ENCODE measurements at regions of chr16 and their contacts with region 1.

Region 1: DNA sequence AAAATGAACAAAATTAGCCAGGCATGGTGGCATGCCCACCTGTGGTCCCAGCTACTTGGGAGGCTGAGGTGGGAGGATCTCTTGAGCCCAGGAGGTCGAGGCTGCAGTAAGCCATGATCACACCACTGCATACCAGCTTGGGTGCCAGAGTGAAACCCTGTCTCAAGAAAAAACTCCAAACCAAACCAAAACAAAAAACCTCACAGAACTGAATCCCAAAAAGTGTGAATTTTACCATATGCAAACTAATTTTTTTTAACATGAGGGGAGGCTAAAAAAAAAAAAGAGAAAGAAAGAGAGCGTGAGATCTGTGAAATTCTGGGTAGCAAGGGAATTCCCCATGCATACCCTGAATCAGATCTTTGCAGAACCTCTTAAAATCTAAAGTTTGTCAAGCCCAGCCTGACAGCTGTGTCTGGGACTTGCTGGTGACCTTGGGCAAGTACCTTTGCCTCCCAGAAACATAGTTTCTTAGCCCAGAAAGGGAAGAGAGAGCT is 17.1 kb upstream of the CDH1 start:
- DNase-seq: peak; percentile 7
- H3K4me3 Mint-ChIP-seq: no peak overlapping the region
- H3K27ac Mint-ChIP-seq: peak overlapping the region; percentile 45
- H3K4me1 Mint-ChIP-seq: peaks cover 18% of the 10 kb centered on the region
- H3K27me3 Mint-ChIP-seq: no peaks in the 10 kb centered on the region

Region 2: GRCh38 chr16:68737046-68737729 is 17.1 kb after region 1 on chr16 and contains the start of gene CDH1:
- intact Hi-C with region 1: loop called (anchors 2 kb)
- DNase-seq: no peak
- H3K4me3 Mint-ChIP-seq: peak within 1 kb of the TSS; percentile 70
- H3K27ac Mint-ChIP-seq: peak within 1 kb of the TSS; percentile 65
- H3K4me1 Mint-ChIP-seq: peaks cover 7% of the 10 kb centered on the region
- H3K27me3 Mint-ChIP-seq: peaks cover 35% of the 10 kb centered on the region
- total RNA-seq, gene CDH1: 0.64 and 2.2 TPM in 2 replicates

Measured in activated T-helper 1 cell treated with anti-CD3 and anti-CD28 coated beads, Interleukin-12 subunit alpha, Interleukin-12 subunit beta, Interleukin-2, Interleukin-4 antibody, amounts not matched to agents 30 ng/mL and 10 ng/mL and 1 ng/mL, durations not matched to agents 14 hours and 24 hours and 36 hours (primary cell).